Posterior vena cava (tissue), 2 donors: ENCODE measurements at regions of chr6 and their contacts with region 1.

Region 1: DNA sequence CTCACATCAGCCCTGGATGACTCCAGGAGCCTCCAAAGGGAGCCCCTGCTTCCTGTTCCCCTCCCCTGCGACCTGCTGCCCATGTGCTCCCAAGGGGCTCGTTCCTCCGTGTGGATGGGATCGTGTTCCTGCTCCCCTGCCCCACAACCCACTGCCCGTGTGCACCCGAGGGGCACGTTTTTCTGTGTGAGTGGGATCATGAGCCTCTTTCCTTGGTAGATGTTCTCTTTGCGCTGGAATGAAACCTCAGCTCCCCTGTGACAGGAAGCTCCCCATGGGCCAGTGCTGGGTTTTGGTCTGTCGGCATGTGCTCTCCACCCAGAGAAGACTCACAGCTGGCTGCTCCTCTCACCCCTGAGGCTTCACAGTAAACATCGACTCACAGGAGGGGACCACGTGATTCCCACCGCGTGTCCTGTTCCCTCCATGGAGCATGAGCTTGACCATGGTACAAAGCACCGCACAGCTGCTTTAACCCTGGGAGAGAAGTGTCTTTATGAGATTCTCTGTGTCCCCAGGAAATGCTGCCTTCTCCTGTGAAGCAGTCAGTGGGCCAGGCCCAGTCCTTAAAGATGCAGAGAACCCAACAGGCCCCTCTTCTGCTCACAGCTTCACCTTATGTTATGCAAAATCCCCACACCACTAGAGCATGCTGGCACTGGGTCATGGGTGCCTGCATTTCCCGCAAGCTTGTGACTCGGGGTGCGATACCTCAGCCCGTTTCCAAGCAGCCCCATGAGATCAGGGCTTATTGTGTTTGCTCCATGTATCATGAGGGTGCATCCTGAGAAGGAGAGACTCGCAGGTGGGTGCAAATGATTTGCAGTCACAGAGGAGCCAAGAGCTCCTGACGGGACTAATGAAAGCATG is 215.1 kb downstream of the ERMARD start:
- DNase-seq: peak; percentile 61

Region 2: GRCh38 chr6:169912266-169913095 is 54.1 kb before region 1 on chr6:
- intact Hi-C with region 1: loop called in 1 of 2 experiments (anchors 2 kb)
- DNase-seq: peak; percentile 59